ENCODE measurements at regions of chr11 and their contacts with region 1.

Region 1: DNA sequence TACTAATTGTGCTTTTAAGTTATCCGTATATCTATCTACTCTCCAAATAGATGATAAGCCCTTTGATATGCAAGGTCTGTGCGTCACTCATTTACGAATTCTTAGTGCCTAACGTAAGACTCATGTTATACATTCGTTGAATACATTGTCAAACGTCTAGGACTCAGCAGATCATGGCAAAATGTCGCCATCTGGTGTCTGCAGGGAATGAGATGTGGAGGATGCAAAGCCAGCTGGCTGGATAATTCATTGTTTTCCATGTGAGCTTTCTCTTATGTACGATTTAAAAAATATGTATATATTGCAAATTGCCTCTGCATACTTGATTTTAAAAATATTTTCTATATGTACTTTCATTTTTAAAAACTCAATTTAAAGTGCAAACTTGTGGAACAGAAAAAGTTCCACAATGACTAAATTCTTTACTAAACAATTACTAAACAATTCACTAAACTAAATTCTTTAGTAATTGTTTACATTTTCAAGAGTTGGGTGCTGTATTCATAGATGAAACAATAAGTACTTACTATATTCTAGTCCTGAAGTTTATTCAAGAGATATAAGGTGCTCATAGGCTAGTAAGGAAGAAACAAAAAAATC is 33.8 kb downstream of the ZNF202 start:
- DNase-seq: peak; percentile 32
- ATAC-seq: peak; percentile 63

Region 2: GRCh38 chr11:123580557-123581275 is 127.0 kb before region 1 on chr11:
- intact Hi-C with region 1: loop called (anchors 5 kb)
- DNase-seq: peak; percentile 73
- ATAC-seq: peak; percentile 63

Region 3: DNA sequence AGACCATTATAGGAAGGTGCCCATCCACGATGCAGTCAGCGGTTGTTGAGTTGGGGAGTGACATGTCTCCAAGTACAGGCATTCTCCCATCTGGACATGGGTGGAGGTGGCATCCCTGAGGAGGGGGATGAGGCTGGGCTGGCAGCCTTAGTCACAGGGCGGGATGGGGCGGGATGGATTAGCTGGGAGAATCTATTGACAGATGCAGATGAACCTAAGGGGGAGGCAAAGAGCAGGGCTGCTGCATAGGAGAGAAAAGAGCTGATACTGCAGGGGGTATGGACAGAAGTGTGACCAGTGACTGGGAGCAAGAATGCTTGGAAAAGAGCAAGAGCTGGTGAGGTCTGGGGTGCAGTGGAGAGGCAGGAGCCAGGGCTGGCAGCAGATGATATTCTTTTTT is 96.0 kb before region 1 on chr11:
- intact Hi-C with region 1: no loop called
- DNase-seq: no peak
- ATAC-seq: no peak

Region 4: GRCh38 chr11:123640677-123641494 is 66.8 kb before region 1 on chr11:
- intact Hi-C with region 1: loop called (anchors 5 kb)
- DNase-seq: peak; percentile 59
- ATAC-seq: peak; percentile 83